MCF 10A (cell line): ENCODE measurements at regions of chrX and their contacts with region 1.

Region 1: GRCh38 chrX:115459883-115460880 is 100.8 kb upstream of the PLS3 start:
- DNase-seq: no peak
- H3K4me3 Mint-ChIP-seq: no peak overlapping the region
- H3K27ac Mint-ChIP-seq: no peak overlapping the region
- H3K4me1 Mint-ChIP-seq: no peaks in the 10 kb centered on the region
- H3K27me3 Mint-ChIP-seq: peaks cover 60% of the 10 kb centered on the region
- CTCF ChIP-seq: no peak

Region 2: DNA sequence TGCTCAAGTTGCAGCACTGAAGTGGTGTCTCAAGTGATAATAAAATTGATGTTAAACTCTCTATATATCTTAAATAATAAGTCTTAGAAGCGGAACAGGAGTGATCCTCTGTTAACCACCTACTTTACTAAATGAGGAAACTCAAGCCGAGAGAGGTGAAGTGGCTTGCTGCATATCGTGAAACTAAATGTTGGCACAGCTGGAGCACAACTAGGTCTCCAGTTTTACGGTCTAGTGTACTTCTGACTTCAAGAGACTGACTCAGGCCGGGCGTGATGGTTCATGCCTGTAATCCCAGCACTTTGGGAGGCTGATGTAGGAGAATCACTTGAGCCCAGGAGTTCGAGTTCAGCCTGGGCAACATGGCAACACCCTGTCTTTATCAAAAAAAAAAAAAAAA is 65.3 kb after region 1 on chrX:
- CTCF ChIA-PET with region 1: no interaction called
- POLR2A ChIA-PET with region 1: no interaction called
- intact Hi-C with region 1: loop called (anchors 10 kb)
- DNase-seq: no peak
- H3K4me3 Mint-ChIP-seq: no peak overlapping the region
- H3K27ac Mint-ChIP-seq: no peak overlapping the region
- H3K4me1 Mint-ChIP-seq: no peaks in the 10 kb centered on the region
- H3K27me3 Mint-ChIP-seq: peaks cover 49% of the 10 kb centered on the region
- CTCF ChIP-seq: no peak